H1 (cell line): ENCODE measurements at regions of chr4 and their contacts with region 1.

Region 1: GRCh38 chr4:92501456-92501855 is 197.7 kb downstream of the GRID2 start:
- DNase-seq: no peak
- H3K4me3 ChIP-seq: no peak overlapping the region
- H3K27ac ChIP-seq: no peak overlapping the region
- H3K4me1 ChIP-seq: peaks cover 4 to 27% (median 8%) of the 10 kb centered on the region in 4 experiments; a peak in 5 of 7 replicates
- H3K27me3 ChIP-seq: no peaks in the 10 kb centered on the region
- CTCF ChIP-seq: no peak
- EP300 ChIP-seq: no peak
- POLR2A ChIP-seq: 0 out of 3 replicates have a peak, but pooled peaks of 1 of the 2 experiments have one; percentile 32
- RAD21 ChIP-seq: no peak

Region 2: DNA sequence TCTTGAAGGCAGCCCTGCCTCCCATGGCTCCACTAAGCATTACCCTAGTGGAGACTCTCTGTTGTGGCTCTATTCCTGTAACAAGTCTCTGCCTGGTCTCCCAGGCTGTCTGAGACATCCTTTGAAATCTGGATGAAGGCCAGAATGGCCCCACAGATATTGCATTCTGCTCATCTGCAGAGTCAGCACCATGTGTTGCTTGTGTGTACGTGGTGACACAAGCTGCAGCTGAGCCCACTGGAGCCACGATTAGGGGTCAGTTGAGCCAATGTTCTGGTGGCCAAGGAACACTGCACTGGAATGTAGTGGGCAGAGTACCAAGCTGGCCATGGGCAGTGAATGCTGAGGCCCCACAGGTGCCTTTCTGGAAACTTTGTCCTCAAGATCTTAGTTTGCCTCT is 168.4 kb before region 1 on chr4:
- CTCF ChIA-PET with region 1: no interaction called
- POLR2A ChIA-PET with region 1: no interaction called
- DNase-seq: no peak
- H3K4me3 ChIP-seq: no peak overlapping the region
- H3K27ac ChIP-seq: no peak overlapping the region
- H3K4me1 ChIP-seq: peaks cover 0 to 9% (median 2%) of the 10 kb centered on the region in 4 experiments; a peak in 4 of 7 replicates
- H3K27me3 ChIP-seq: no peaks in the 10 kb centered on the region
- CTCF ChIP-seq: peak in 1 of 3 experiments; percentile 0; a peak in 1 of 4 replicates
- EP300 ChIP-seq: no peak
- POLR2A ChIP-seq: no peak
- RAD21 ChIP-seq: no peak

Region 3: DNA sequence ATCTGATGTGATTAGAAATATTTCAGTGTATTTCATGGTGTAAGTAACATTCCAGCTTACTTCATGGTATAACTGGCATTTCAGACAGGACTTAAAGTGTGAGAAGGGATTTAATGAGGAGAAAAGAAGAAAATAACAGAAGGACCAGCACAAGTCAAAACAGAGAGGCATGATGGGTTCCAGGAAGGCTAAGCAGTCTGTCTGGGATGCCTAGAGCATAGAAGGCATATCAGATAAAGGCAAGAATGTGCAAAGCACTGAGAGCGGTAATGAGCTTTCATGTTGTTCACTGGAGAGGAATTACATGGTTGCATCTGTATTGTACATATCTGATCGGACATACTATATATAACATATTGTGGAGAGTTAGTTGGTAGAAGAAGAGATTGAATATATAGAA is 143.5 kb before region 1 on chr4:
- CTCF ChIA-PET with region 1: no interaction called
- POLR2A ChIA-PET with region 1: no interaction called
- DNase-seq: no peak
- H3K4me3 ChIP-seq: no peak overlapping the region
- H3K27ac ChIP-seq: no peak overlapping the region
- H3K4me1 ChIP-seq: peaks cover 0 to 9% (median 4%) of the 10 kb centered on the region in 4 experiments; a peak in 4 of 7 replicates
- H3K27me3 ChIP-seq: no peaks in the 10 kb centered on the region
- CTCF ChIP-seq: no peak
- EP300 ChIP-seq: no peak
- POLR2A ChIP-seq: no peak
- RAD21 ChIP-seq: no peak

Region 4: DNA sequence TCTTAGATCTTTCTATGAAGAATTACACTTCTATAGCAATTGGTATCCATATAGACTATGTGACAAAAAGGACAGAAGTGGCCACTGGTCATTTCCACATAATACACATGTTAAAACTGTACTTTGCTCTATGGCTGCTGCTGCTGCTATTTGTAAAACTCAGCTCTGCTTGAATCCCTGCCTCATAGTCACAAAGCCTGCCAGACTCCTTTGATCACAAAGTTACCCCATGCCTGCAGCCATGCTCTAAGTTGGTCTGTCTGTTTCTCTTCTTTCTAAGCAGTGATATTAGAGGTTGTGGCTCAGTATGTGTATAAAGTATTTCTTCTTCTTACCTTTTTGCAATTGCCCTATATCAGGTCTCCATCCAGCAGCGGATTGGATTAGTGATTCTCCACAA is 13.2 kb after region 1 on chr4:
- CTCF ChIA-PET with region 1: interaction called, 5 read pairs
- POLR2A ChIA-PET with region 1: interaction called, 23 read pairs
- DNase-seq: no peak
- H3K4me3 ChIP-seq: no peak overlapping the region
- H3K27ac ChIP-seq: no peak overlapping the region
- H3K4me1 ChIP-seq: peaks cover 0 to 14% (median 3%) of the 10 kb centered on the region in 4 experiments; a peak in 3 of 7 replicates
- H3K27me3 ChIP-seq: no peaks in the 10 kb centered on the region
- CTCF ChIP-seq: no peak
- EP300 ChIP-seq: no peak
- POLR2A ChIP-seq: no peak
- RAD21 ChIP-seq: no peak

Region 5: GRCh38 chr4:92551616-92552015 is 50.2 kb after region 1 on chr4:
- CTCF ChIA-PET with region 1: no interaction called
- POLR2A ChIA-PET with region 1: no interaction called
- DNase-seq: no peak
- H3K4me3 ChIP-seq: no peak overlapping the region
- H3K27ac ChIP-seq: no peak overlapping the region
- H3K4me1 ChIP-seq: peaks cover 0 to 3% (median 1%) of the 10 kb centered on the region in 4 experiments; a peak in 3 of 7 replicates
- H3K27me3 ChIP-seq: peaks cover 0 to 2% (median 0%) of the 10 kb centered on the region in 4 experiments; a peak in 1 of 7 replicates
- CTCF ChIP-seq: peak in 1 of 3 experiments; percentile 7; a peak in 1 of 4 replicates
- EP300 ChIP-seq: no peak
- POLR2A ChIP-seq: no peak
- RAD21 ChIP-seq: peak; percentile 16 to 26; a peak in 2 of 4 replicates

Region 6: GRCh38 chr4:92561702-92562101 is 60.2 kb after region 1 on chr4:
- CTCF ChIA-PET with region 1: no interaction called
- POLR2A ChIA-PET with region 1: no interaction called
- DNase-seq: no peak
- H3K4me3 ChIP-seq: no peak overlapping the region
- H3K27ac ChIP-seq: no peak overlapping the region
- H3K4me1 ChIP-seq: peaks cover 0 to under 1% (median 0%) of the 10 kb centered on the region in 4 experiments; a peak in 1 of 7 replicates
- H3K27me3 ChIP-seq: no peaks in the 10 kb centered on the region
- CTCF ChIP-seq: no peak
- EP300 ChIP-seq: no peak
- POLR2A ChIP-seq: no peak
- RAD21 ChIP-seq: no peak